ENCODE measurements at regions of chr1 and their contacts with region 1.

Region 1: DNA sequence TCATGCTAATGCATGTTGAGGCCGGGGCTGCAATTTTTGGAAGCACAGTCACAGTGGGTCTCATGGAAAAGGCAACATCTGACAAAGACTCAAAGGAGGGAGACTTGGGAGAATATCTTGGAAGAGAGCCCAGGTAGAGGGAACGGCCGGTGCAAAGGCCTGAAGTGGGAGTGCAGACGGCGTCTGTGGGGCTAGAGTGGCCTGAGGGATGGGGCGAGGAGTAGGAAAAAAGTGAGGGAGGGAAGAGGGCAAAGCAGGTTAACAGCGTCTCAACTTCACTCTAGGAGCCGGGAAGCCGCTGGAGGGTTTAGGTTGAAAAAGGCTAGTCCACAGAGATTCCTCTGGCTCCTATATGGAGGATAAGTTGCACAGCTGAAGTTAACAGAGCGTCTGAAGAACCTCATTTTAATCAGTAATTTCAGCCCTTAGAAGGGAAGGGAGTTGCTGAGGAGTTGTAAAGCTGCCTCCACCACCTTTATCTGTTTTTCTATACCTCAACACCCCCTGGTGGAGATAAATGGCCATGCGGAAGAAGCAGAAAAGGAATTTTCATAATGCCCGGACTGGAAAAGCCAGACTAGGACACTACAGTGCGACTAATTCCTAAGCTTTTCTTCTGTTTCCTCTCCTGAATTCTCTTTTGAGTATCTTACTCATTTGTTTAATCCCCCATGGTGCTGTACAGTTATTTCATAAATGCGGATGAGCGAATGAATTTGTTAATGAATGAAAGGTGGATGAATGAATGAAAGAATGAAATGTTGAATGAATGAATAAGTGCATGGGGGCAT is 78.7 kb upstream of the ZNF281 start:
- DNase-seq: no peak
- ATAC-seq: peak; percentile 60 to 76
- H3K4me3 ChIP-seq: no peak overlapping the region
- H3K27ac ChIP-seq: no peak overlapping the region
- H3K4me1 ChIP-seq: peaks cover 0 to 6% of the 10 kb centered on the region in 2 donors
- H3K27me3 ChIP-seq: no peaks in the 10 kb centered on the region
- CTCF ChIP-seq: peak; percentile 55 to 83 (median 77)
- POLR2A ChIP-seq: no peak

Region 2: DNA sequence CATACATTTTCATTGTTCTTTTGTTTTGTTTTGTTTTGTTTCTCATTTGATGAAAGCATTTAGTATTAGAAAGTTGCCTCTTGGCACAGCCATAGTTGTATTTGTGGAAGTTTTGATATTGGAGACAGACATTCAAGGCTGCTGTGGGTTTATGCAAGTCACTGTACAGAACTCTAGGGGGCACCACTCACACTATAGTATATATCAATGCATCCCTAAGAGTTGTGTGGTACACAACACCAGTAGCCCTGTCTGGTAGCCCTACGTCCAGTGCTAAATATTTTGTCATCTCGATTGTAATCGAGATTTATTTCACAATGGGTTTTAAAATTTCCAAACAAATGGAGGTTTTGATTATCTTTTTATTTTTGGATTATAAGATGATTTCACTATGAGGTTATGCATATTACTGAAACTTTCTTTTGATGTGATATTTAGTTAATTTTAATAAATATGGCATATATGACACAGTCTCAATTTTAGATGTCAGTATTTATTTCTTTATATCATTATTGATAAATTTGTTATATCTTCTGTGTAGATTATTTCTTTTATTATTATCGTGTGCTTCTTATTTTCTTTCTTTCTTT is 348.8 kb before region 1 on chr1:
- in situ Hi-C with region 1: loop called in 2 of 4 experiments (anchors 25 kb)
- intact Hi-C with region 1: loop called (anchors 5 kb)
- DNase-seq: no peak
- ATAC-seq: peak; percentile 52 to 79
- H3K4me3 ChIP-seq: no peak overlapping the region
- H3K27ac ChIP-seq: no peak overlapping the region
- H3K4me1 ChIP-seq: no peaks in the 10 kb centered on the region
- H3K27me3 ChIP-seq: no peaks in the 10 kb centered on the region
- CTCF ChIP-seq: peak; percentile 31 to 62 (median 50)
- POLR2A ChIP-seq: no peak

Region 3: GRCh38 chr1:200279810-200280411 is 208.7 kb before region 1 on chr1:
- in situ Hi-C with region 1: loop called in 3 of 4 experiments (anchors 10 to 25 kb)
- intact Hi-C with region 1: loop called (anchors 1 kb)
- DNase-seq: no peak
- ATAC-seq: no peak
- H3K4me3 ChIP-seq: no peak overlapping the region
- H3K27ac ChIP-seq: no peak overlapping the region
- H3K4me1 ChIP-seq: no peaks in the 10 kb centered on the region
- H3K27me3 ChIP-seq: no peaks in the 10 kb centered on the region
- CTCF ChIP-seq: peak in 4 of 5 experiments; percentile 22 to 58 (median 40)
- POLR2A ChIP-seq: no peak

Region 4: GRCh38 chr1:200464784-200465400 is 23.7 kb before region 1 on chr1:
- in situ Hi-C with region 1: no loop called
- intact Hi-C with region 1: no loop called
- DNase-seq: no peak
- ATAC-seq: no peak
- H3K4me3 ChIP-seq: no peak overlapping the region
- H3K27ac ChIP-seq: no peak overlapping the region
- H3K4me1 ChIP-seq: no peaks in the 10 kb centered on the region
- H3K27me3 ChIP-seq: peaks cover 0 to 4% (median 0%) of the 10 kb centered on the region in 3 donors
- CTCF ChIP-seq: no peak
- POLR2A ChIP-seq: no peak

Region 5: GRCh38 chr1:200525090-200525987 is 36.8 kb after region 1 on chr1:
- in situ Hi-C with region 1: no loop called
- intact Hi-C with region 1: no loop called
- DNase-seq: no peak
- ATAC-seq: no peak
- H3K4me3 ChIP-seq: no peak overlapping the region
- H3K27ac ChIP-seq: no peak overlapping the region
- H3K4me1 ChIP-seq: no peaks in the 10 kb centered on the region
- H3K27me3 ChIP-seq: no peaks in the 10 kb centered on the region
- CTCF ChIP-seq: no peak
- POLR2A ChIP-seq: no peak